ENCODE measurements at regions of chr5 and their contacts with region 1.

Region 1: DNA sequence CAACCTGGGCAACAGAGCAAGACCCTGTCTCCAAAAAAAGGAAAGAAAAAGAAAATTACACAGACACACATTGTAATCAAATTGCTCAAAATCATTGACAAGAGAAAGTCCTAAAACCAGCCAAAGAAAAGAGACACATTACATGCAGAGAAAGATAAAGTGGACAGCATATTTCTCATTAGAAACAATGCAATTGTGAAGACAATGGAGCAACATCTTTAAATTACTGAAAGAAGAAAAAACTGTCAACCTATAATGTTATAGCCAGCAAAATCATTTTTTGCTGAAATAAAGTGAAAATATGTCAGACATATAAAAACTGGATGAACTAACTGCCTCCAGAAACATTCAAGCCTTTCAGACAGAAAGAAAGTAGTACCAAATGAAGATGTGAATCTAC is 120.6 kb downstream of the TMEM167A start:
- DNase-seq: no peak
- H3K4me3 ChIP-seq: no peak overlapping the region
- H3K27ac ChIP-seq: no peak overlapping the region
- H3K4me1 ChIP-seq: no peaks in the 10 kb centered on the region
- H3K27me3 ChIP-seq: no peaks in the 10 kb centered on the region
- CTCF ChIP-seq: no peak

Region 2: DNA sequence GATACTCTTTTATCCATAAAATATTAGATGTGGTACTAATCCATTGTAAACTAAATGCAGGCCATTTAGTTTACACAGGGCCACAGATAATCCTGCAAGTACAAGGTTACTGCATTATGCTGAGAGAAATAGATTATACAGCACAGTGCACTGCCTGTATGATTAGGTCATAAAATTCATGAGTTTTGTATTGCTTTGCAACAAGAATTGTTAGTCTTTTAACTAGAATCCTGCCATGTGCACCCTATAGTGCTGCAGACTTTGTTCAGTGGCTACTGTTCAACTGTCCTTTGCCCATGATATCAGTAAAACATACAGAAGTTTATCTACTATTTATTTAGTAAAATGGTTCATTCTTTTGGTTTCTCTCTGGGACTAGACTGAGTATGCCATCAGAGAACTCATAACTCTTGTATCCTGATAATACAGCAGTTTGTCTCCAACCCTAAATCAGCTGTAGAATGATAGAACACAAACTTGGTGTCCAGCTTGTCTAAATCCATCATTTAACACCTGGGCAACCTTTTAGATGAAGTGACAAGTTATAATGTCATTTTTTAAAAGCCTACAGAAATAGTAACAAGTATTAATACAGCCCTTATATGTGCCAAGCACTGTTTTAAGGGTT is 170.6 kb before region 1 on chr5:
- CTCF ChIA-PET with region 1: no interaction called
- POLR2A ChIA-PET with region 1: interaction called, 11 read pairs
- intact Hi-C with region 1: no loop called
- DNase-seq: no peak
- H3K4me3 ChIP-seq: no peak overlapping the region
- H3K27ac ChIP-seq: no peak overlapping the region
- H3K4me1 ChIP-seq: no peaks in the 10 kb centered on the region
- H3K27me3 ChIP-seq: no peaks in the 10 kb centered on the region
- CTCF ChIP-seq: no peak

Region 3: DNA sequence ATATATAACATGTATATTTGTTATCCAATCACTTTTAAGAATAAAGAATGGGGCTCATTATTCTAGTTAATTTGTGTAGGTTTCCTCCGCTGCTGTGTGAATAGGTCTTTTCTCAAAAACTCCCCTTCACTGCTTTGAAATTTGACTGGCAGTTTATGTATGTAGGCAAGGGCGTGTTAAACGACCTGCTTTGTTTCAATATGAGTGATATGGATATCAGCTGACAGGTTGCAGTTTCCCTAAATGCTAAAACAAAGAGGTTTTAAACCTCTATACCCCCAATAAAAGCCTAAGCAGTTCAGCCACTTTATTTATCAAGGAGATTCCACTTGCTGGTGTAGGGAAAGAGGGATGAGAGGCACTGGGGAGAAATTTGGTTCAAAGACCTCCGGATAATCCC is 39.0 kb before region 1 on chr5:
- CTCF ChIA-PET with region 1: no interaction called
- POLR2A ChIA-PET with region 1: no interaction called
- intact Hi-C with region 1: no loop called
- DNase-seq: no peak
- H3K4me3 ChIP-seq: no peak overlapping the region
- H3K27ac ChIP-seq: no peak overlapping the region
- H3K4me1 ChIP-seq: no peaks in the 10 kb centered on the region
- H3K27me3 ChIP-seq: no peaks in the 10 kb centered on the region
- CTCF ChIP-seq: no peak

Measured in PC-9 (cell line).